Body of pancreas (tissue), 4 donors: ENCODE measurements at regions of chr13 and their contacts with region 1.

Region 1: DNA sequence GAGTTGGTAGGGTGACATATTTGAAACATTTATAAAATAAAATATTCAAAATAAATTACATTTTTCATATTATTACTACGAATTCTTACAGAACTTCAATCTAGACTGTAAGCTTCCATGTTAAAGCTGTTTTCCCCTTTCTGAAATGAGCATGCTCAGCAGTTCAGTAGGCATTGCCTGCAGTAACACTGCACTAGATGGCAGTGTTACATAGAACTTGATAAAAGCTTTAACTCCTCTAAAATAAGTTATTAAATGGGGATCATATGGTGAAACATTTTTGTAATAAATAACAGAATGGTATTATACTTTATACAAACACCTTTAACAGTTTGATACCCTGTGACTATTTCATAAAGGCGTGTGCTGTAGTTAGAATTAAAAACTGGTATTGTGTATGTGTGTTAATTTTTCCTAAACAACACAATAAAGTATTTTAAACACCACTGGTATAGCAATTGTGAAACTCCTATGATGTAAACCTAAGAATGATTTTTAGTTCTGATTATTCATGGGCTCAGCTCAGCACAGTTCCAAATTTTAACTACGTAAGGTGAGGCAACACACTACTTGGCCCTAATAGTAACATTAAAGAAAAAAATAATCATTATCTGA is 11.6 kb upstream of the GPR18 start:
- DNase-seq: peak in 1 of 4 donors; percentile 46
- ATAC-seq: no peak
- H3K4me3 ChIP-seq: no peak overlapping the region
- H3K27ac ChIP-seq: peak overlapping the region in 1 of 4 donors; percentile 42
- H3K4me1 ChIP-seq: no peaks in the 10 kb centered on the region
- H3K27me3 ChIP-seq: no peaks in the 10 kb centered on the region
- CTCF ChIP-seq: peak in 6 of 7 experiments; percentile 19 to 59 (median 47)
- POLR2A ChIP-seq: no peak

Region 2: GRCh38 chr13:99176309-99177276 is 93.1 kb before region 1 on chr13:
- intact Hi-C with region 1: loop called (anchors 5 kb)
- DNase-seq: peak; percentile 78 to 83 (median 80)
- ATAC-seq: peak; percentile 78
- H3K4me3 ChIP-seq: no peak overlapping the region
- H3K27ac ChIP-seq: no peak overlapping the region
- H3K4me1 ChIP-seq: no peaks in the 10 kb centered on the region
- H3K27me3 ChIP-seq: no peaks in the 10 kb centered on the region
- CTCF ChIP-seq: peak; percentile 85 to 94 (median 90)
- POLR2A ChIP-seq: no peak

Region 3: GRCh38 chr13:99425485-99426341 is 156.0 kb after region 1 on chr13:
- intact Hi-C with region 1: loop called (anchors 10 kb)
- DNase-seq: no peak
- ATAC-seq: no peak
- H3K4me3 ChIP-seq: no peak overlapping the region
- H3K27ac ChIP-seq: no peak overlapping the region
- H3K4me1 ChIP-seq: no peaks in the 10 kb centered on the region
- H3K27me3 ChIP-seq: no peaks in the 10 kb centered on the region
- CTCF ChIP-seq: no peak
- POLR2A ChIP-seq: no peak